ENCODE measurements at regions of chr4 and their contacts with region 1.

Region 1: GRCh38 chr4:164779811-164780216 is 25.9 kb downstream of the SMIM31 start:
- DNase-seq: peak; percentile 74
- H3K4me3 Mint-ChIP-seq: no peak overlapping the region
- H3K27ac Mint-ChIP-seq: no peak overlapping the region
- H3K4me1 Mint-ChIP-seq: no peaks in the 10 kb centered on the region
- H3K27me3 Mint-ChIP-seq: peaks cover 7% of the 10 kb centered on the region

Region 2: GRCh38 chr4:165096776-165097175 is 317.0 kb after region 1 on chr4:
- intact Hi-C with region 1: loop called (anchors 2 kb)
- DNase-seq: no peak
- H3K4me3 Mint-ChIP-seq: no peak overlapping the region
- H3K27ac Mint-ChIP-seq: no peak overlapping the region
- H3K4me1 Mint-ChIP-seq: no peaks in the 10 kb centered on the region
- H3K27me3 Mint-ChIP-seq: no peaks in the 10 kb centered on the region